ENCODE measurements at regions of chrX and their contacts with region 1.

Region 1: GRCh38 chrX:72461766-72462165 is 110.9 kb downstream of the HDAC8 start:
- DNase-seq: no peak
- ATAC-seq: no peak
- H3K4me3 ChIP-seq: no peak overlapping the region
- H3K27ac ChIP-seq: no peak overlapping the region
- H3K4me1 ChIP-seq: no peaks in the 10 kb centered on the region
- H3K27me3 ChIP-seq: no peaks in the 10 kb centered on the region
- CTCF ChIP-seq: no peak

Region 2: DNA sequence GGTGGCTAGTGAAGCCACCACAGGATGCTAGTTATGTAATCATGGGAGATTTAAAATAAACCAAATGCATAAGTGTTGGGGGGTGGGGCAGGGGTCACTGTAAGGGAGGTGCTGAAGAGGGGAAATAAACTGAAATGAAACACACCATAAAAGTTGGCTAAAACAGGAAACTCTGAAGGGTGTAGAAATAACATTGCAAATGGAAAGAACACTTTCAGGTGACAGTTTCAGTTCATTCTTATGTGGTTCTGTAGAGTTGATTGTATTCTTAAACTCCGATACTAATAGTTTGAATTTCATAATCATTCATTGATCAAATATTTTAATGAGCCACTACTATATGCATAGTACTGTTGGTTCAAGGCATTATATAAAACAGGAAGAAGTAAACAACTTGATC is 30.7 kb after region 1 on chrX:
- CTCF ChIA-PET with region 1: no interaction called
- POLR2A ChIA-PET with region 1: no interaction called
- intact Hi-C with region 1: loop called (anchors 2 kb)
- DNase-seq: no peak
- ATAC-seq: no peak
- H3K4me3 ChIP-seq: no peak overlapping the region
- H3K27ac ChIP-seq: no peak overlapping the region
- H3K4me1 ChIP-seq: no peaks in the 10 kb centered on the region
- H3K27me3 ChIP-seq: no peaks in the 10 kb centered on the region
- CTCF ChIP-seq: no peak

Measured in PC-3 (cell line).